MCF 10A (cell line): ENCODE measurements at regions of chr1 and their contacts with region 1.

Region 1: DNA sequence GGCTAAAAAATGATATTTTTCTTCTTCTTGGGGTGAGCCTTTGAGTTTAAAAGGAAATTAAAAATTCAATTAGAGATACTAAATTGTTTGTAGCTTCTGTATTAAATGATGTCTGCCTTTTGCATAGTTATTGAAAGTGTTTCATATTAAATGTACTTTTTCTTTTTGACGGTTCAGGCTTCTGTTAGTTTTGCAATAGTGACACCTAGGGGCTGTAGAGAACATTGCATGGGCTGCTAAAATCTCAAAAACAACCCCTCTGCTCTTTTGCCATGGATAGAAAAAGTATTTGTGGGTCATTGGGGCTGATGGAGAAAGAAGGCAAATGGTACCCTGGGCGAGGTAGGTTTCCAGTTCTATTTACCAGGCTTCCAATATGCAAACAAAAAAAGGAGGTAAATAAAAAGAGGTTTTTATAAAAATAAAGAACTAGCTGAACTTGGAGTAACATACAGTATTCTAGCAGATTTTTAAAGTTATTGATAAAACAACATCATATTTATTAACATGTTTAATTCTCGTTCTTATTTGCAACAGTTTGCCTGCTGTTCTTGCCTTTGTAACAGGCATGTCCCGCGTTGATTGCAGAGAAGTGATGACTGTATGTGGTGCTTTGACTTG is 115.4 kb upstream of the HOOK1 start:
- DNase-seq: peak; percentile 59
- H3K4me3 Mint-ChIP-seq: no peak overlapping the region
- H3K27ac Mint-ChIP-seq: peak overlapping the region; percentile 57
- H3K4me1 Mint-ChIP-seq: peaks cover 24% of the 10 kb centered on the region
- H3K27me3 Mint-ChIP-seq: no peaks in the 10 kb centered on the region
- CTCF ChIP-seq: peak; percentile 76

Region 2: GRCh38 chr1:58755468-58755872 is 943.9 kb before region 1 on chr1:
- CTCF ChIA-PET with region 1: interaction called, 17 read pairs
- POLR2A ChIA-PET with region 1: interaction called, 3 read pairs
- intact Hi-C with region 1: no loop called
- DNase-seq: peak; percentile 98
- H3K4me3 Mint-ChIP-seq: peak overlapping the region; percentile 49
- H3K27ac Mint-ChIP-seq: peak overlapping the region; percentile 91
- H3K4me1 Mint-ChIP-seq: peaks cover 39% of the 10 kb centered on the region
- H3K27me3 Mint-ChIP-seq: no peaks in the 10 kb centered on the region
- CTCF ChIP-seq: no peak

Region 3: DNA sequence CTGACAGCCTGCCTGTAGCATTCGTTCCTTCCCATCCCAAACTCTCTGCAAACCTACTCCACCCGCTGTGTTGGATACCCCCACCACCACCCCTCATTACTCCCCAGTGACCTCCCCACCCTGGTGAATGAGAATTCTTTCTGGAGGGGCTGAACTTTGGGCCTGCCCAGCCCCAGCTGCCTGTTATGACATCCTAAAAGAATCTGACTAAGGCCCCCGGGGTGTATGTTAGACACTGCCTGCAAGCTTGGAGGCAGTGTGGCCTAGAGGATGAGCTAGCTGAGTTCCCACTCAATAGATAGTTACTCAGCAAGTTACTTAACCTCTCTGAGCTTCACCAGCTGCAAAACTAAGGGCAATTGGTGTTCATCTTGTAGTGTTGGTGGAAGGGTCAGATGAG is 512.7 kb before region 1 on chr1:
- CTCF ChIA-PET with region 1: interaction called, 7 read pairs
- POLR2A ChIA-PET with region 1: no interaction called
- intact Hi-C with region 1: loop called (anchors 5 kb)
- DNase-seq: no peak
- H3K4me3 Mint-ChIP-seq: no peak overlapping the region
- H3K27ac Mint-ChIP-seq: no peak overlapping the region
- H3K4me1 Mint-ChIP-seq: no peaks in the 10 kb centered on the region
- H3K27me3 Mint-ChIP-seq: no peaks in the 10 kb centered on the region
- CTCF ChIP-seq: no peak

Region 4: DNA sequence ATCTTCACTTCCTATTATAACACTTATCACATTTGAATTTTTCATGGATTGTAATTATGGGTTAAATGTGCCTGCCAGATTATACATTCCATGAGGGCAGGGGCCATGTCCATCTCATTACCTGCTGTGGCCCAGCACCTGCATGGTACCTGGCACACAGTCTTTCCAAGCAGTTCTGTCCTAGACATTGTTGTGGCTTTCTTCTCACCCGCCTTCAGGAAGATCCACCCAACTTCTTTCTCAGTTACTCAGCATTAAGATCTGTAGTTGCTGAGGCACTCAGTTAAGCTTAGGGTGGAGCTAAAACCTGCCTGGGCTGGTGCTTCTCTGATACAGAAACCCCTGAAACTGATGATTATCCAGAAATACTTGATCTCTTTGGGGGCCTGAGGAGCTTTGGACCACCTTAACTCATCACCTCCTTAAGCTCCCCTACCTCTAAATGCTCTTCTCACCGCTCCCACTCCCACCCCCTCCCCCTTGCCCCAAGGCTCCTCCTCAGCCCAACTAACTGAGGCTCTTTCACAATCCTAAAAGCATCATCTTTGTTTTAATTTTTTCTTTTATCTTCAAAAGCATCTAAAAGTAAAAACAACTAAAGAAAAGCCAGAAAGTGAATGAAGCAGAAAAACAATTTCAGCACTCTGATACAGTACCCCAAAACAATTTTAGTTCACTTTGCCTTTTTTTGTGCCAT is 211.9 kb before region 1 on chr1:
- CTCF ChIA-PET with region 1: interaction called, 12 read pairs
- POLR2A ChIA-PET with region 1: no interaction called
- intact Hi-C with region 1: no loop called
- DNase-seq: peak; percentile 41
- H3K4me3 Mint-ChIP-seq: peak overlapping the region; percentile 50
- H3K27ac Mint-ChIP-seq: peak overlapping the region; percentile 88
- H3K4me1 Mint-ChIP-seq: peaks cover 30% of the 10 kb centered on the region
- H3K27me3 Mint-ChIP-seq: no peaks in the 10 kb centered on the region
- CTCF ChIP-seq: no peak

Region 5: DNA sequence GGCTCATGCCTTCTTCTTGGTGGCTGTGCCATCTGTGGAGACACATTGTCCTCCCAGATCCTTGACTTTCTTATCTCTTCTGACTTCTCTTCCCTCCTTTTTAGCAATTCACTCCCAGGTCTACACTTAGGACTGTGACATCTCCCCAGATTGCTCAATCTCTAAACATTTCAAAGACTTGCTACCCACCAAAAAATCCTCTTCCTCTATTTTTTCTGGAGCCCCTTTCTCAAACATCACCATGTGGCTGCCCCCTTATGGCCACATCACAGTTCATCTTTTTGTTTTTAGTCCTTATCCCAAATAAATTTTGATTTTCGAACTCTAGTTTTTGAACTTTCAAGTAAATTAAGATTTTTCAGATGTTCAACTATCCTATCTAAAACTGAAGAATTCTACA is 33.2 kb before region 1 on chr1:
- CTCF ChIA-PET with region 1: no interaction called
- POLR2A ChIA-PET with region 1: no interaction called
- intact Hi-C with region 1: no loop called
- DNase-seq: no peak
- H3K4me3 Mint-ChIP-seq: no peak overlapping the region
- H3K27ac Mint-ChIP-seq: no peak overlapping the region
- H3K4me1 Mint-ChIP-seq: no peaks in the 10 kb centered on the region
- H3K27me3 Mint-ChIP-seq: no peaks in the 10 kb centered on the region
- CTCF ChIP-seq: no peak

Region 6: GRCh38 chr1:59678493-59679228 is 20.7 kb before region 1 on chr1:
- CTCF ChIA-PET with region 1: interaction called, 16 read pairs
- POLR2A ChIA-PET with region 1: interaction called, 5 read pairs
- intact Hi-C with region 1: no loop called
- DNase-seq: peak; percentile 78
- H3K4me3 Mint-ChIP-seq: no peak overlapping the region
- H3K27ac Mint-ChIP-seq: peak overlapping the region; percentile 69
- H3K4me1 Mint-ChIP-seq: peaks cover 33% of the 10 kb centered on the region
- H3K27me3 Mint-ChIP-seq: no peaks in the 10 kb centered on the region
- CTCF ChIP-seq: no peak

Region 7: DNA sequence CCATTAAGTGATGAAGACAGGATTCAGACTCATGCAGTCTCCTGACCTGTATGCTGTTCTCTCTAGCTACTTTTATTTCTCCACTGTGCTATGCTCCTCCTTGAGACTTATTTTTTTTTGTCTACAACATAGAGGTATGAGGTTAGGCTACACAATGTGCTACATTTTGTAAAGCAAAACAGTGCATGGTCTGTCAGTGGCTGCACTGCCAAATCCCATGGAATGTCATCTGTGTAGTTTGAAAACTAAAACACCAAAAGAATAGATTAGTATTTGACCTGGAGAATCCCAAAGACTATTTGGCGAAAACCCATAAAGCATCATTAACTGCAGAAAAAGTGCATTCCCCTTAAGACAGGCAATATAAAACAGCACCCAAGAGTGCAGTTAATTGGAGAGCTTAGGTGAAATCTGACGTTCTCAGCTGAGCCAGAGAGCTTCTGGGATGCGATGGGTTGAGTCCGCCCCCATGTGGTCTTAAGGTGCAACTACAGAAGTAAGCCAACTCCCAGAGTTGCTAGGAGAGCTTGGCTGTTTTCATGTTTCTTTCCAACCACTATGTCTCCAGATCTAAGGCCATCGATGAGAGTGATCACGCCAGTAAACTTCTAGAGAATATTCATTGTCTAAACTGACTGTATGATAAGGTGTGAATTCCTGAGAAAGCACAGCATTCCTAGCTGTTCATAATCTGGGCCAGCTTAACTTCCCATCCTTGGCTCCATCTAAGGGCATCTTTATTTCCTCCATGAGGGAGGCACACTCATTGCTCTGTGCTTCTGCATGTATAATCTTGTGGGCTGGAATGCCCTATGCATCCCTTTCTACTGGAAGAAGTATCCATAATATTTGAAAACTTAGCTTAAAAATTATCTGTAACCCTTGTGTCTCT is 248.0 kb after region 1 on chr1:
- CTCF ChIA-PET with region 1: no interaction called
- POLR2A ChIA-PET with region 1: no interaction called
- intact Hi-C with region 1: no loop called
- DNase-seq: peak; percentile 76
- H3K4me3 Mint-ChIP-seq: no peak overlapping the region
- H3K27ac Mint-ChIP-seq: no peak overlapping the region
- H3K4me1 Mint-ChIP-seq: no peaks in the 10 kb centered on the region
- H3K27me3 Mint-ChIP-seq: peaks cover 14% of the 10 kb centered on the region
- CTCF ChIP-seq: peak; percentile 83